K562 (cell line): ENCODE measurements at regions of chr2 and their contacts with region 1.

Region 1: DNA sequence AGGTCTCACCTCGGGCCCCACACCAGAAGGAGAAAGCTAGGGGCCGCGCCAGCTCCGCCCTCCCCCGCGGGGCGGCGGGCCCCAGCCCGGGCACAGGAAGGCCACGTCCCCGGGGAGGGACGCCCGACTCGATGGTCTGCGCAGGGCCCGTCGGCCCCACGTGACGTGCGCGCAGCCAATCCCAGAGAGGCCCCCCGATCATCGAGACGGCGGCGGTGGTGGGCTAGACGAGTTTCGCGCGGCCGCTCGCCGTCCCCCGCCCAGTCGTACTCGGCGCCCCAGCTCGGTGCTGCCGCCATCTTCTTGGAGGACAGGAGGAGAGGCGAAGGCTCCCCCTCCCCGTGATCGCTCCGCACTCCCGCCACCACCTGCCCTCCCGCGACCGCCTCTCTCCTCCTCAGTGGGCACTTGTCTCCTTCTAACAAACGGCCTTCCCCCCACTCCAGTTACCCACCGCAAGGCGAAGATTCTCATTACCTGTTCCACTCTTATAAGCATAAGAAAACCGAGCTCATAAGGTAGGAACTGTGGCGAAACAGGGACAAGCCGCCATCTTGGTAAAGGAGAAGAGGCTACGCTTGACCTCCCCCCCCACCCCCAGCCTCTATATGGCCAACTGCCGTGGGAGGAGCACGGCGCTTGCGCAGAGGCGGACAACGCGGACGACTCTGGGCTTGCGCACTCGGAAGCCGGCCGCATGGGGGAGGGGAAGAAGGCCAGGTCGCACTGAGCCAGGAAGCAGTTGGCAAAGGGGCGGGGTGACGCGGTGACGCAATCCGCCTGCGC is at the start of gene HDLBP:
- DNase-seq: peak; percentile 92 to 98 (median 94)
- ATAC-seq: peak; percentile 88
- H3K4me3 ChIP-seq: peak within 1 kb of the TSS; percentile 93
- H3K27ac ChIP-seq: peak within 1 kb of the TSS; percentile 100
- H3K4me1 ChIP-seq: peaks cover 13 to 37% of the 10 kb centered on the region in 2 experiments; a peak in 4 of 5 replicates
- H3K27me3 ChIP-seq: no peaks in the 10 kb centered on the region
- CTCF ChIP-seq: peak in 2 of 3 experiments; percentile 6 to 17; a peak in 1 of 6 replicates
- EP300 ChIP-seq: no peak
- POLR2A ChIP-seq: peak; percentile 92
- RAD21 ChIP-seq: 0 out of 4 replicates have a peak, but pooled peaks of 1 of the 2 experiments have one; percentile 2
- polyA plus RNA-seq, gene HDLBP: 24.4 to 68.4 TPM

Region 2: GRCh38 chr2:241279413-241279812 is 35.9 kb before region 1 on chr2:
- CTCF ChIA-PET with region 1: no interaction called
- POLR2A ChIA-PET with region 1: interaction called, 7 read pairs
- in situ Hi-C with region 1: no loop called
- intact Hi-C with region 1: loop called (anchors 5 kb)
- DNase-seq: peak in 2 of 4 experiments; percentile 18 to 49
- ATAC-seq: peak; percentile 90
- H3K4me3 ChIP-seq: no peak overlapping the region
- H3K27ac ChIP-seq: peak overlapping the region; percentile 53; the same call in 2 of the 3 replicates
- H3K4me1 ChIP-seq: peaks cover 4 to 24% of the 10 kb centered on the region in 2 experiments; a peak in 3 of 5 replicates
- H3K27me3 ChIP-seq: no peaks in the 10 kb centered on the region
- CTCF ChIP-seq: no peak
- EP300 ChIP-seq: peak; percentile 48; the same call in 1 of the 2 replicates
- POLR2A ChIP-seq: no peak
- RAD21 ChIP-seq: 0 out of 4 replicates have a peak, but pooled peaks of 1 of the 2 experiments have one; percentile 17

Region 3: DNA sequence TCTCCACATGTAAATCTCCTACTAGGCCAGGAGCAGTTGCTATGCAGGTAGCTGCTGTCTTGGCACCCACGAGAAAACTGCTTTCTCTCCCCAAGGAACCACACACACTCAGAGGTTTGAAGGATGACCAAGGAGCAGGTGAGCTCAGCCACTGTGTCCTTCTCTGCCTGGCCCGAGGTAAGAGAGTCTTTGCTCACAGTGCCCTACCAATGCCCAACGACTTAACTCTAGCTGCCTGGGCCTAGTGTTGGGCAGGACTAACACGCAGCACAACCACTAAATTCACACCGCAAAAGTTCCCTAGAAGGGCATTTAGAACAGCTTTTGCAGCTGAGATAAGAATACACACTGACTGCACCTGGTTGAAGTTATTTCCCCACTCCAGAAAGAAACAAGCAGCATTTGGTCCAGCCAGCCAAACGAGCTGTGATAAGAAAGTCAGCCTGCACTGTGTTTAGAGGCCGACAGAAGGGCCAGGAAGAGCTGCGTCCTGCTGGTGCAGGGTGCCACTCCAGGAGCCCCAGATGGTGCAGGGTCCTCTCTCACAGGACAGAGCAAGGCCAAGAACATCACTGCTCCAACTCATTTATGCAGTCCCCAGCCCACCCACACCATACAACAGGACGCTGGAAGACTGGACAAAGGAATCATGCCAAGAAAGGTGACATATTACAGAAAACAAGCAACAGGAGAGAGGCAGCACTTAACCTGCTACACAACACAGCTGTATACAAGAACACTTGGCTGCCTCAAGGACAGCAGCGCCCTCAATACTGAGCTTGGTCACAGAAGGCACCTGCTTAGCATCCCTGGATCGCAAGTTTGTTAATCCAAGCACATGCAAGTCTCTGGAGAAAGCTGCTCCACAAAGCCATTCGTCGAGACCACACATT is 12.3 kb before region 1 on chr2:
- CTCF ChIA-PET with region 1: no interaction called
- POLR2A ChIA-PET with region 1: interaction called, 64 read pairs
- in situ Hi-C with region 1: no loop called
- intact Hi-C with region 1: no loop called
- DNase-seq: peak in 2 of 4 experiments; percentile 22 to 39
- ATAC-seq: peak; percentile 63
- H3K4me3 ChIP-seq: no peak overlapping the region
- H3K27ac ChIP-seq: 0 out of 3 replicates have a peak overlapping the region, but pooled peaks have one; percentile 48
- H3K4me1 ChIP-seq: peaks cover 18 to 28% of the 10 kb centered on the region in 2 experiments; a peak in 4 of 5 replicates
- H3K27me3 ChIP-seq: no peaks in the 10 kb centered on the region
- CTCF ChIP-seq: no peak
- EP300 ChIP-seq: no peak
- POLR2A ChIP-seq: no peak
- RAD21 ChIP-seq: no peak

Region 4: GRCh38 chr2:241720560-241720959 is 405.3 kb after region 1 on chr2:
- CTCF ChIA-PET with region 1: no interaction called
- POLR2A ChIA-PET with region 1: no interaction called
- in situ Hi-C with region 1: no loop called
- intact Hi-C with region 1: no loop called
- DNase-seq: peak in 1 of 4 experiments; percentile 1
- ATAC-seq: no peak
- H3K4me3 ChIP-seq: no peak overlapping the region
- H3K27ac ChIP-seq: no peak overlapping the region
- H3K4me1 ChIP-seq: peaks cover 0 to 4% of the 10 kb centered on the region in 2 experiments; a peak in 1 of 5 replicates
- H3K27me3 ChIP-seq: no peaks in the 10 kb centered on the region
- CTCF ChIP-seq: no peak
- EP300 ChIP-seq: no peak
- POLR2A ChIP-seq: no peak
- RAD21 ChIP-seq: no peak